Aorta (tissue), 5 donors: ENCODE measurements at regions of chr3 and their contacts with region 1.

Region 1: GRCh38 chr3:16370872-16371740 is 106.1 kb downstream of the OXNAD1 start:
- DNase-seq: peak in 1 of 2 donors; percentile 72
- ATAC-seq: peak; percentile 60
- H3K4me3 ChIP-seq: no peak overlapping the region
- H3K27ac ChIP-seq: peak overlapping the region; percentile 54 to 77
- H3K4me1 ChIP-seq: peaks cover 6% of the 10 kb centered on the region in 2 donors
- H3K27me3 ChIP-seq: no peaks in the 10 kb centered on the region

Region 2: DNA sequence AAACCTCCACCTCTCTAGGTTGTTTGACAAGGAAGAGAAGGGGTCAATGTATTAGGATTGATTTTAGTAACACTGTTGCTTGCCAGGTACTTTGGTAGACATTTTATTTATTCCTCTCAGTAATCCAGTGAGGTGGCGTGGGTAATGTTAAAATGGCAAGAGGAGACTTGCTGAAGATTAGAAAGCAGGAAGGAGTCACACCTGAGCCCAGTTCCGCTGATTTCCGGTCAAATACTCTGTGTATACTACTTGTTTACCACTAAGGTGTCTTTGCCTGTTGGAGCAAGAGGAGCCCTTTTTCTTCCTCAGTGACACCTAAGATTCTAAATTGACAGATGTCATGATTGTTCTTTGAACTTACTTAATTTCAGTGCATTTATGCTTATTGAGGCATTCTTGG is 104.4 kb before region 1 on chr3:
- intact Hi-C with region 1: no loop called
- DNase-seq: no peak
- ATAC-seq: no peak
- H3K4me3 ChIP-seq: no peak overlapping the region
- H3K27ac ChIP-seq: no peak overlapping the region
- H3K4me1 ChIP-seq: peaks cover 0 to 6% of the 10 kb centered on the region in 2 donors
- H3K27me3 ChIP-seq: no peaks in the 10 kb centered on the region

Region 3: GRCh38 chr3:16338999-16339398 is 32.1 kb before region 1 on chr3:
- intact Hi-C with region 1: no loop called
- DNase-seq: no peak
- ATAC-seq: peak; percentile 67
- H3K4me3 ChIP-seq: no peak overlapping the region
- H3K27ac ChIP-seq: peak overlapping the region in 1 of 2 donors; percentile 7
- H3K4me1 ChIP-seq: peaks cover 0 to 4% of the 10 kb centered on the region in 2 donors
- H3K27me3 ChIP-seq: no peaks in the 10 kb centered on the region

Region 4: DNA sequence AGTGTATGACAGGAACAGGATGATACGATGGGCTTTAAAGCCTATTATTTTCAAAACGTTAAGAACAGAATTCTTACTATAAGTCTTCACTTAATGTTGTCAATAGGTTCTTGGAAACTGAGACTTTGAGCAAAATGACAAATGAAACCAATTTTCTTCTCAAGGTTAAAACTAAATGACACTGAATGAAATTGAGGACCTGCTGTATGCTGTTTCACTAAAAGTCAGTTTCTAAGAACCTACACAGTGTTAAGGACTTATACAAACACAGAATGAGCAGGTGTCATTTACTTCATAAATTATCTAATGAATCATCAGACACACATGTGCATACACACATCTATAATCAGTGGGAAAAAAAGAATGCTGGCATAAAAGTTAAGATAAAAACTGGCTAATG is 35.5 kb after region 1 on chr3:
- intact Hi-C with region 1: no loop called
- DNase-seq: no peak
- ATAC-seq: no peak
- H3K4me3 ChIP-seq: no peak overlapping the region
- H3K27ac ChIP-seq: no peak overlapping the region
- H3K4me1 ChIP-seq: peaks cover 0 to 3% of the 10 kb centered on the region in 2 donors
- H3K27me3 ChIP-seq: no peaks in the 10 kb centered on the region

Region 5: GRCh38 chr3:16448639-16449070 is 77.5 kb after region 1 on chr3:
- intact Hi-C with region 1: loop called in 1 of 2 experiments (anchors 2 kb)
- DNase-seq: peak; percentile 92 to 94
- ATAC-seq: peak; percentile 86
- H3K4me3 ChIP-seq: no peak overlapping the region
- H3K27ac ChIP-seq: peak overlapping the region in 1 of 2 donors; percentile 40
- H3K4me1 ChIP-seq: peaks cover 8 to 13% of the 10 kb centered on the region in 2 donors
- H3K27me3 ChIP-seq: no peaks in the 10 kb centered on the region